Adrenal gland (tissue), 19 donors: ENCODE measurements at regions of chr17 and their contacts with region 1.

Region 1: DNA sequence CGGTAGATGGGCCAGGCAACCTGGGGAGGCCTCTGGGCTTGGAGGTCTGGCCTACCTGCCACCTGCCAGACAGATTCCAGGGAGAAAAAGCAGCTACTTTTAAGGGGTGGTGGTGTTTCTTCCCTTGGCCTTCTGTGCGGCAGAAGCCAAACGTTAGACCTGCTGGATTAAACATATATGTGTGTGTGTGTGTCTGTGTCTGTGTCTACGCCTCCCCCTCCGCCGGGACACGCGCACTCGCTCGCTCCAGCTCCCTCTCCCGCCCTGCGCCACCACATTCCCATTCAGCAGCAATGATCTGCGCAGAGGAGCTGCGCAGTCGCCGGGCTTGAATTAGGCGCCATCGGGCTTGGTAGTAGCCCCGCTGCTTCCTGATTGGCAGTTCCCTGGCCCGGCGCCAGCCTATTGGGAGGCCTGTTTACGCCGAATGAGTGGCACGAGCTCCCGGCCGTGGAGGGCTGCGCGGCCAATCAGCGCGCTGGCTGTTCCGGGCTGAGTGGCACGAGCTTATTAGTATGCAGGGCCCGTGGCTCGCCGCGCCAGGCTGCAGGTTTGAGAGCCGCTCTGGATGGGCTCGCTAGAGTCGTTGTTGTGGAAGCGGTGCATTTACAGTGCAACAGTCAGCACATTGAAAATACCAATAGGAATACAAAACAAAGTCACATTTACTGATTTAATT is at the start of gene BAHCC1:
- DNase-seq: peak; percentile 100
- H3K4me3 ChIP-seq: peak within 1 kb of the TSS in 2 of 4 donors; percentile 61 to 96
- H3K27ac ChIP-seq: peak within 1 kb of the TSS; percentile 48 to 96 (median 92)
- H3K4me1 ChIP-seq: peaks cover 24 to 27% of the 10 kb centered on the region in 2 donors
- H3K27me3 ChIP-seq: no peaks in the 10 kb centered on the region
- CTCF ChIP-seq: peak in 1 of 6 experiments; percentile 2
- POLR2A ChIP-seq: peak; percentile 88 to 97
- total RNA-seq, gene BAHCC1: 1.7 to 35.3 (median 18.5) TPM

Region 2: GRCh38 chr17:81294856-81295680 is 100.0 kb before region 1 on chr17 and contains the start of gene SLC38A10:
- intact Hi-C with region 1: loop called in 1 of 2 experiments (anchors 10 kb)
- DNase-seq: peak; percentile 89 to 93 (median 91)
- H3K4me3 ChIP-seq: peak within 1 kb of the TSS; percentile 43 to 94 (median 85)
- H3K27ac ChIP-seq: peak within 1 kb of the TSS; percentile 22 to 98 (median 86)
- H3K4me1 ChIP-seq: peaks cover 5 to 40% of the 10 kb centered on the region in 2 donors
- H3K27me3 ChIP-seq: no peaks in the 10 kb centered on the region
- CTCF ChIP-seq: no peak
- POLR2A ChIP-seq: peak; percentile 80 to 88
- total RNA-seq, gene SLC38A10: 22.5 to 163 (median 102) TPM